ENCODE measurements at regions of chr5 and their contacts with region 1.

Region 1: GRCh38 chr5:32585446-32586275 is at the start of gene SUB1:
- DNase-seq: peak; percentile 87 to 98
- H3K4me3 ChIP-seq: peak within 1 kb of the TSS; percentile 84
- H3K27ac ChIP-seq: peak within 1 kb of the TSS; percentile 77
- H3K4me1 ChIP-seq: peaks cover 10% of the 10 kb centered on the region
- H3K27me3 ChIP-seq: no peaks in the 10 kb centered on the region
- CTCF ChIP-seq: no peak
- total RNA-seq, gene SUB1: 314 and 328 TPM in 2 replicates

Region 2: GRCh38 chr5:32092938-32093812 is 492.5 kb before region 1 on chr5:
- CTCF ChIA-PET with region 1: no interaction called
- POLR2A ChIA-PET with region 1: interaction called, 10 read pairs
- intact Hi-C with region 1: no loop called
- DNase-seq: peak; percentile 63 to 75
- H3K4me3 ChIP-seq: no peak overlapping the region
- H3K27ac ChIP-seq: no peak overlapping the region
- H3K4me1 ChIP-seq: no peaks in the 10 kb centered on the region
- H3K27me3 ChIP-seq: no peaks in the 10 kb centered on the region
- CTCF ChIP-seq: peak; percentile 93

Region 3: GRCh38 chr5:32232441-32233219 is 353.0 kb before region 1 on chr5:
- CTCF ChIA-PET with region 1: interaction called, 17 read pairs
- POLR2A ChIA-PET with region 1: no interaction called
- intact Hi-C with region 1: loop called (anchors 1 kb)
- DNase-seq: peak; percentile 67 to 92
- H3K4me3 ChIP-seq: no peak overlapping the region
- H3K27ac ChIP-seq: no peak overlapping the region
- H3K4me1 ChIP-seq: peaks cover 8% of the 10 kb centered on the region; the same call in 1 of the 2 replicates
- H3K27me3 ChIP-seq: no peaks in the 10 kb centered on the region
- CTCF ChIP-seq: peak; percentile 98

Region 4: DNA sequence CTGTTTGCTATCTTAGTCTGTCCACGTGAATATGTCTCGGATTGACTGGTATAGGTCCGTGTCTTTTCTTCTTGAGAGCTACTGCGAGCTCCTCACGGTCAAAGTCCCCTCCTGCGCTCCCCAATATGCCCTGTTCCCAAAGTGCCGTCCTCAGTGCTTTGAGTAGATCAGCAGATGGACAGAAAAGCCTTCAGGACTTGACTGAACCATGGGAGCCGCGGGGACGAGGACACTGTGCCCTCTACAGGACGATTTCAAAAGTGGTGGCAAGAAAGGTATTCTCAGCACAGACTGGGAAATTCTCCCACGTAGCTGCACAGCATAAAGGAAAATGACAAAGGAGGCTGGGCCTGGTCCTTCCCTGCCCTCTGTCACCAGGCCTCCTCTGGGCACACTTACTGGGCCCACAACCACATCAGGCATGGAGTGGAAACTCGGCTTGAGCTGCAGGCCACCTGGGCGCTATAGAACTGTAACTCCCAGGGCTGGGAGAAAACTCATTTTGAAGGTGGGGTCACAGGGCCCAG is 256.3 kb before region 1 on chr5:
- CTCF ChIA-PET with region 1: interaction called, 11 read pairs
- POLR2A ChIA-PET with region 1: no interaction called
- intact Hi-C with region 1: no loop called
- DNase-seq: peak; percentile 60 to 72
- H3K4me3 ChIP-seq: no peak overlapping the region
- H3K27ac ChIP-seq: no peak overlapping the region
- H3K4me1 ChIP-seq: peaks cover 14% of the 10 kb centered on the region
- H3K27me3 ChIP-seq: no peaks in the 10 kb centered on the region
- CTCF ChIP-seq: peak; percentile 83

Region 5: GRCh38 chr5:32419791-32420190 is 165.9 kb before region 1 on chr5:
- CTCF ChIA-PET with region 1: interaction called, 15 read pairs
- POLR2A ChIA-PET with region 1: interaction called, 3 read pairs
- intact Hi-C with region 1: loop called (anchors 10 kb)
- DNase-seq: no peak
- H3K4me3 ChIP-seq: no peak overlapping the region
- H3K27ac ChIP-seq: no peak overlapping the region
- H3K4me1 ChIP-seq: no peaks in the 10 kb centered on the region
- H3K27me3 ChIP-seq: no peaks in the 10 kb centered on the region
- CTCF ChIP-seq: no peak

Region 6: DNA sequence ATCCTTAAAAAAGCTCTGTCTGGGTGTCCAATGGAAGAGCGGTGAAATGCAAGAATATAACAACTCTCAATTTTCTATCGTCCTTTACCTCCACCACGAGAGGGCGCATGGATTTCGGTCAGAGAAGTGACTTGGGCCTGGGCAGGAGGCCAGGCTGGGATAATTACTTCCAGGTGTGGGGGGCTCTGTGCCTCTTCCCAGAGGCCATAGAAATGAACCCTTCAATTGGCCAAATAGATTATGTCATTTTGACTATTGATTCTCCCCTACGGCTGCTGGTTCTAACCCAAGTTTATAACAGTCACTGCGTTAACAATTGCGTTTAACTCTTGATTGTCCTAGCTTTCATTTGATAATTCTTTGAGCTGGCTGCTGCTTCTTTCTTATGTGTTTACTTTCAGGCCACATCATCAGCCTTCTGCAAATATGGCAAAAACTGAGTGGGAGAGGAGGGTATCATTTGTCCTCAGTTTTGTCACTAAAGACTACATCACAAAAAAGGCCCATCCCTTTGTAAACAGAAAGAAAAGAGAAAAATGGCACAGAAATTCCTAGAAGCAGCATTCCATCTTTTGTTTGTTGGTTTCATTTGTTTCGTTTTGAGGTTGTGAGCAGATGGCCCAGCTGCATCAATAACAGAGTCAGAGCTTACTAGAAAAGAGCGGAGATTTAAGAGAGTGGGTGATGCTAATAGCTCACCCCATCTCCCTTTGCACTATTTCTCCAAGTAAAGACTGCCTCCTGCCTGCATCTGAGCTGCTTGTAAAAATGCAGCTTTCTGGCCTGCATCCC is 95.7 kb before region 1 on chr5:
- CTCF ChIA-PET with region 1: interaction called, 74 read pairs
- POLR2A ChIA-PET with region 1: interaction called, 24 read pairs
- intact Hi-C with region 1: loop called (anchors 1 kb)
- DNase-seq: peak; percentile 58 to 67
- H3K4me3 ChIP-seq: no peak overlapping the region
- H3K27ac ChIP-seq: no peak overlapping the region
- H3K4me1 ChIP-seq: no peaks in the 10 kb centered on the region
- H3K27me3 ChIP-seq: no peaks in the 10 kb centered on the region
- CTCF ChIP-seq: peak; percentile 92

Region 7: GRCh38 chr5:32522429-32523143 is 63.1 kb before region 1 on chr5:
- CTCF ChIA-PET with region 1: interaction called, 13 read pairs
- POLR2A ChIA-PET with region 1: no interaction called
- intact Hi-C with region 1: no loop called
- DNase-seq: peak; percentile 48 to 59
- H3K4me3 ChIP-seq: no peak overlapping the region
- H3K27ac ChIP-seq: no peak overlapping the region
- H3K4me1 ChIP-seq: no peaks in the 10 kb centered on the region
- H3K27me3 ChIP-seq: peaks cover 30% of the 10 kb centered on the region
- CTCF ChIP-seq: no peak

Region 8: DNA sequence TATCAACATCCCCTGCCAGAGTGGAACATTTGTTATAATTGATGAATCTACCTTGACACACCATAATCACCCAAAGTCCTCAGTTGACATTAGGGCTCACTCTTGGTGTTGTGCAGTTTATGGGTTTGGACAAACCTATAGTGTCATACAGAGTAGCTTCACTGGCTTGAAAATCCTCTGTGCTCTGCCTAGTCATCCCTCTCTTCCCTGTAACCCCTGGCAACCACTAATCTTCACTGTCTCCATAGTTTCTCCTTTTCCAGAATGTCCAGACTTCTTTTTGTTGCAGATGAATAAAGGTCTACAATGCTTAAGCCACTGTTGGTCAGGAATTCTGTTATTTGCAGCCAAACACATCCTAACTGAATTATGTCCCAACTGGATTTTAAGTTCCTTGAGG is 22.8 kb before region 1 on chr5:
- CTCF ChIA-PET with region 1: no interaction called
- POLR2A ChIA-PET with region 1: no interaction called
- intact Hi-C with region 1: no loop called
- DNase-seq: no peak
- H3K4me3 ChIP-seq: no peak overlapping the region
- H3K27ac ChIP-seq: no peak overlapping the region
- H3K4me1 ChIP-seq: no peaks in the 10 kb centered on the region
- H3K27me3 ChIP-seq: peaks cover 8% of the 10 kb centered on the region; the same call in 1 of the 2 replicates
- CTCF ChIP-seq: no peak

Region 9: DNA sequence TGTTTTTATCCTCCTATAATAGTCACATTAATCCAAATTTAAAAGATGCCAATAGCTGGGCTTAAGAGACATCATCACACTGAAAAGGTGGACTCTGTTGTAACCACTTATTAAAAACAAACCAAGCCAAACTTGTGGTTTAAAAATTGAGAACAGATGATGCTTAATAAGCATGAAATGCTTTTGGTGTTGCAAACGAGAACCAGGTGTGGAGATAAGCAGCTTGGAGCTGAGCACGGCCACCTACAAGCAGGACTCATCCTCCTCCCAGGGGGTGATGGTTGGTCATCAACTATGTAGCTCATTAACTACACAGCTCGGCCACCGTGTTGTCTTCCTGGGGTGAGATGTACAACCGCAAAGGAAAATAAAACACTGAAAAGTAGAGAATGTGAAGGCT is 279.8 kb after region 1 on chr5:
- CTCF ChIA-PET with region 1: no interaction called
- POLR2A ChIA-PET with region 1: no interaction called
- intact Hi-C with region 1: no loop called
- DNase-seq: no peak
- H3K4me3 ChIP-seq: no peak overlapping the region
- H3K27ac ChIP-seq: no peak overlapping the region
- H3K4me1 ChIP-seq: no peaks in the 10 kb centered on the region
- H3K27me3 ChIP-seq: no peaks in the 10 kb centered on the region
- CTCF ChIP-seq: no peak

Measured in PC-9 (cell line).